SK-N-SH (cell line): ENCODE measurements at regions of chr3 and their contacts with region 1.

Region 1: GRCh38 chr3:13648060-13649001 is 99.4 kb downstream of the FBLN2 start:
- DNase-seq: peak; percentile 94
- H3K4me3 ChIP-seq: peak overlapping the region in 1 of 2 experiments; percentile 42; a peak in 1 of 4 replicates
- H3K27ac ChIP-seq: no peak overlapping the region
- H3K4me1 ChIP-seq: peaks cover 0 to 10% of the 10 kb centered on the region in 2 experiments; a peak in 1 of 4 replicates
- H3K27me3 ChIP-seq: no peaks in the 10 kb centered on the region; the same call in 1 of the 2 replicates
- CTCF ChIP-seq: peak; percentile 98
- EP300 ChIP-seq: no peak
- RAD21 ChIP-seq: peak; percentile 99

Region 2: GRCh38 chr3:13452490-13453335 is 195.6 kb before region 1 on chr3:
- CTCF ChIA-PET with region 1: interaction called, 12 read pairs
- POLR2A ChIA-PET with region 1: no interaction called
- DNase-seq: peak; percentile 59
- H3K4me3 ChIP-seq: peak overlapping the region; percentile 12 to 66; a peak in 3 of 4 replicates
- H3K27ac ChIP-seq: peak overlapping the region; percentile 27 to 31; a peak in 2 of 4 replicates
- H3K4me1 ChIP-seq: no peaks in the 10 kb centered on the region; a peak in 1 of 4 replicates
- H3K27me3 ChIP-seq: no peaks in the 10 kb centered on the region
- CTCF ChIP-seq: peak; percentile 75
- EP300 ChIP-seq: no peak
- RAD21 ChIP-seq: peak; percentile 82

Region 3: DNA sequence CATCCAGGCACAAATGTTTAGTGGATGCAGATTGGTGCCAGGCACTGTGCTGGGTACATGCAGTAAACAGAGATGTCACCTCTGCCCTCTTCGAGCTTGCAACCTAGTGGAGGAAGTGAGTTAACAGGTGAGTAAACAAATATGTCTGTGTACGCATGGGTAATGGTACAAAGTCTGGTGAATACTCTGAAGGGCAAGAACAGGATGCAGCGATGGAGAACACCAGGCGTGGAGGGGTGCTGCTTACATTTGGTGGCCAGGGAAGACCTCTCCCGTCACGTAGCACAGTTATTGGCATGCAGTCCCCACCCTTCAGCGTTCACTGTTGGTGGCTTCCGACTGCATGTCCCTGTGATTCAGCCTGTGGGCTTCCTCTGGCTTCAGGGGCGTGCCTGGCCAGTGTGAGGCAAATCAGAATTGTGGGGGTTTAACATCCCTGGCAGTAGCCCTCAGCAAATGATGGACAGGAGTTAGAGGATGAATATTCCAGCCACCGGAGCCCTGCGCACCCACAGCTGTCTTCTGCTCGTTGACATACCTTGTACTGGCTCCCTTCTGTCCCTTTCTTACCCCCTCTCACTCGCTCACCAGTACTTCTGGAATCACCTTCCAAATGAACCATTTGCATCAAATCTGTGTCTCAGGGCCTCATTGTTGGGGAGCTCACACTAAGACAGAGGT is 177.3 kb before region 1 on chr3:
- CTCF ChIA-PET with region 1: interaction called, 15 read pairs
- POLR2A ChIA-PET with region 1: no interaction called
- DNase-seq: no peak
- H3K4me3 ChIP-seq: no peak overlapping the region
- H3K27ac ChIP-seq: no peak overlapping the region
- H3K4me1 ChIP-seq: peaks cover 0 to 5% of the 10 kb centered on the region in 2 experiments; a peak in 1 of 4 replicates
- H3K27me3 ChIP-seq: peaks cover 22% of the 10 kb centered on the region; the same call in 1 of the 2 replicates
- CTCF ChIP-seq: no peak
- EP300 ChIP-seq: no peak
- RAD21 ChIP-seq: no peak

Region 4: DNA sequence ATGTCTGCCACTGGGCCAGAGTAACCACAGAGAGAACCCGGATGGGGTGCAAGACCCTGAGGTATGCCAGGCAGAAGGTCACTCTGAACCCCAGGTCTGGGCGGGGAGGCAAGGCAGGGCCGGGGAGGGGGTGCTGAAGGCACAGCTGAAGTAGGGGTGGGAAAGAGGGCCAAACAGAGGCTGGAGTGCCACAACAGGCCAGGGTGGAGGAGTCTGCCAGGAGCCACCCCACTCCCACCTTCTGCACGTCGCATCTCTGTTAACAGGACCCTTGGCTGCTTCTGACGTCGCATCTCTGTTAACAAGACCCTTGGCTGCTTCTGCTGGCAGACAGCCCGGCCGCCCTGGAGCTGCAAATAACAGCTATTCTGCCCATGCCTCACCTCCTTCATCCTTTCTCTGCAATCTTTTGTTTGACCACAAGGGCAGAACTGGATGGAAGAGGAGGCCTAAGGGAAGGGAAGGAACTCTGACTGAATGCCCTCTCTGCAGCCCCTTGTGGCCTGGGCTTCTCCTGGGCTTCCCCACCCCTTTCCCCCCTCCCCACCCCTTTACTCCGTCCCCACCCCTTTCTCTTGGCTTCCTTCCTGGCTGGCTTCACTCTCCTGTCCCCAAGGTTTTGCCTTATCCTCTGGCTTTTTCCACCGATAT is 120.0 kb before region 1 on chr3:
- CTCF ChIA-PET with region 1: interaction called, 13 read pairs
- POLR2A ChIA-PET with region 1: no interaction called
- DNase-seq: peak; percentile 72
- H3K4me3 ChIP-seq: no peak overlapping the region
- H3K27ac ChIP-seq: no peak overlapping the region
- H3K4me1 ChIP-seq: peaks cover 0 to 21% of the 10 kb centered on the region in 2 experiments; a peak in 3 of 4 replicates
- H3K27me3 ChIP-seq: no peaks in the 10 kb centered on the region
- CTCF ChIP-seq: peak; percentile 28
- EP300 ChIP-seq: no peak
- RAD21 ChIP-seq: no peak

Region 5: GRCh38 chr3:13548696-13549622 is 99.4 kb before region 1 on chr3 and contains the start of gene FBLN2:
- CTCF ChIA-PET with region 1: interaction called, 10 read pairs
- POLR2A ChIA-PET with region 1: no interaction called
- DNase-seq: peak; percentile 99
- H3K4me3 ChIP-seq: peak within 1 kb of the TSS in 1 of 2 experiments; percentile 38; a peak in 2 of 4 replicates
- H3K27ac ChIP-seq: no peak within 1 kb of the TSS; a peak in 1 of 4 replicates
- H3K4me1 ChIP-seq: peaks cover 0 to 35% of the 10 kb centered on the region in 2 experiments; a peak in 1 of 4 replicates
- H3K27me3 ChIP-seq: no peaks in the 10 kb centered on the region
- CTCF ChIP-seq: no peak
- EP300 ChIP-seq: no peak
- RAD21 ChIP-seq: no peak
- polyA plus RNA-seq, gene FBLN2: 4.8 and 5.2 TPM in 2 replicates

Region 6: DNA sequence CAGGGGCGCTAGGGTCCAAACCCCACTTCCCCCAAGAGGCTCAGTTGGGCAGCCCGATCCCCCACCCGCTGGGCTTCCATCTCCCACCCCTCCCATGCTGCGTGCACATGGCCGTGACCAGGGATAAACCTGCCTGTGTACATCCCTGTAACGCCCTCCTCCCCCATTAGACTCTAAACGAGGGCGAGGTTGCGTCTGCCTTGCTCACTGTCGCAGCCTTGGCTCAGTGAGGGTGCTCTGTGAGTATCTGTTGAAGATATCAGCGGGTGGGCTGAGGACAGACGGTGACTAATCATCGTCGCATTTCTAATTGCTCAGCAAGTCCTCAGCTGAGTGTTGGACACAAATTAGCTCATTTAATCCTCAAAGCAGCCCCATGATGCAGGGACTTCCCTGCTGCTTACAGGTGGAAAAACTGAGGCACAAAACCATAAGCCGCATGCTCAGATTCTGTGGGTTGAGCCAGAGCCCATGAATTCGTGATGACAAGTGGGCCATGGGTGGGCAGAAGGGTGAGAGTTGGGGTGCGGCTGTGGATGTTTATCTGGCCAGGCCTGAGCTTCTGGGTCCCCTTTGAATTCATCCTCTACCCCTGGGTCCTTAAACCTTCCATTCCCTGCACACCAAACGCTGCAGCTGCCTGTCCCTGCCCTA is 73.4 kb before region 1 on chr3:
- CTCF ChIA-PET with region 1: interaction called, 138 read pairs
- POLR2A ChIA-PET with region 1: interaction called, 5 read pairs
- DNase-seq: no peak
- H3K4me3 ChIP-seq: no peak overlapping the region
- H3K27ac ChIP-seq: peak overlapping the region in 1 of 2 experiments; percentile 99; a peak in 3 of 4 replicates
- H3K4me1 ChIP-seq: peaks cover 3 to 76% of the 10 kb centered on the region in 2 experiments; a peak in 2 of 4 replicates
- H3K27me3 ChIP-seq: no peaks in the 10 kb centered on the region
- CTCF ChIP-seq: no peak
- EP300 ChIP-seq: no peak
- RAD21 ChIP-seq: no peak

Region 7: DNA sequence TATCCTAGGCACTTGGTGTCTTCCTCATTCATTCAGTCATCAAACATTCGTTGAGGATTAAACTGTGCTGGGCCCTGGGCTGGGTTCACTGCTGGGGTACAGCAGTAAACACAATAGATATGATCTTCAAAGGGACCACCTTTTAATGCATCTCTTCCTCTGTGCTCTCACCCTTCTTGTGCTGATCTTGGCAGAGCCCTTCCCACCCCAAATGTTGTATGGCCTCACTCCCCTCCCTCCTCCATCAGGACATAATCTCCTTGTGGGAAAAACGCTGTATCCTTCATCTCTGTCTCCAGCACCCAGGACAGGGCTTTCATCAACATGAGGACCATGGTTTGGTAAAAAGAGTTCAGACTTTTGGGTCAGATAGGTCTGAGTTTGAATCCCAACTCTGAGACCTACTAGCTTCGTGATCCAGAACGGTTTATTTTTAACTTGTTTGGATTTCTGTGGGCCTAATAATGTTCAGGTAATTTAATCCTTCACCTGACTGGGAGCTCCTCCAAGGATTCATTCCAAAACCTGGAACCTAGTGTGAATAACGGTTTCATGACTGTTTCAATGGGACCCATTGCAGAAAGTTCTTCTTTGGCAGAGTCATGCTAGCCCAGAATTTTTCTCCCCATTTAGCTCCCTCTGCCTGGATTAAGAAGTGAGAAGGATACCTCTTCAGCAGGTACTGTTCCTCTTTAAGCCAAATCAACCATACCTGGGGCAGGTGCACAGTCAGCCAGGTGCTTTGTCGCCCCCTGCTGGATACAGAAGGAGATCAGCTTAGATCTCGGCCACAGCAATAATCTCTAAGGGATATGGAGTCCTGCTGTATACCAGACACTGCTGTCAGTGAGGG is 236.7 kb after region 1 on chr3:
- CTCF ChIA-PET with region 1: interaction called, 979 read pairs
- POLR2A ChIA-PET with region 1: no interaction called
- DNase-seq: peak; percentile 72
- H3K4me3 ChIP-seq: peak overlapping the region in 1 of 2 experiments; percentile 28; a peak in 1 of 4 replicates
- H3K27ac ChIP-seq: no peak overlapping the region
- H3K4me1 ChIP-seq: peaks cover 0 to 4% of the 10 kb centered on the region in 2 experiments; a peak in 1 of 4 replicates
- H3K27me3 ChIP-seq: peaks cover 11% of the 10 kb centered on the region; the same call in 1 of the 2 replicates
- CTCF ChIP-seq: peak; percentile 66
- EP300 ChIP-seq: no peak
- RAD21 ChIP-seq: peak; percentile 72